HEK293 (cell line): ENCODE measurements at regions of chr11 and their contacts with region 1.

Region 1: GRCh38 chr11:36564376-36565030 is 3.3 kb upstream of the RAG1 start:
- H3K4me3 ChIP-seq: peak overlapping the region; percentile 21; the same call in 1 of the 2 replicates
- H3K27ac ChIP-seq: no peak overlapping the region
- H3K4me1 ChIP-seq: no peaks in the 10 kb centered on the region
- CTCF ChIP-seq: peak; percentile 32

Region 2: DNA sequence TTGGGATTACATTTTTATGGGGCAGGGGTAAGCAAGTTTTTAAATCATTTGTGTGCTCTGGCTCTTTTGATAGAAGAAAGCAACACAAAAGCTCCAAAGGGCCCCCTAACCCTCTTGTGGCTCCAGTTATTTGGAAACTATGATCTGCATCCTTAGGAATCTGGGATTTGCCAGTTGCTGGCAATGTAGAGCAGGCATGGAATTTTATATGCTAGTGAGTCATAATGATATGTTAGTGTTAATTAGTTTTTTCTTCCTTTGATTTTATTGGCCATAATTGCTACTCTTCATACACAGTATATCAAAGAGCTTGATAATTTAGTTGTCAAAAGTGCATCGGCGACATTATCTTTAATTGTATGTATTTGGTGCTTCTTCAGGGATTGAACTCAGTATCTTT is 13.4 kb after region 1 on chr11:
- CTCF ChIA-PET with region 1: interaction called, 51 read pairs
- POLR2A ChIA-PET with region 1: no interaction called
- H3K4me3 ChIP-seq: no peak overlapping the region
- H3K27ac ChIP-seq: no peak overlapping the region
- H3K4me1 ChIP-seq: no peaks in the 10 kb centered on the region
- CTCF ChIP-seq: no peak

Region 3: DNA sequence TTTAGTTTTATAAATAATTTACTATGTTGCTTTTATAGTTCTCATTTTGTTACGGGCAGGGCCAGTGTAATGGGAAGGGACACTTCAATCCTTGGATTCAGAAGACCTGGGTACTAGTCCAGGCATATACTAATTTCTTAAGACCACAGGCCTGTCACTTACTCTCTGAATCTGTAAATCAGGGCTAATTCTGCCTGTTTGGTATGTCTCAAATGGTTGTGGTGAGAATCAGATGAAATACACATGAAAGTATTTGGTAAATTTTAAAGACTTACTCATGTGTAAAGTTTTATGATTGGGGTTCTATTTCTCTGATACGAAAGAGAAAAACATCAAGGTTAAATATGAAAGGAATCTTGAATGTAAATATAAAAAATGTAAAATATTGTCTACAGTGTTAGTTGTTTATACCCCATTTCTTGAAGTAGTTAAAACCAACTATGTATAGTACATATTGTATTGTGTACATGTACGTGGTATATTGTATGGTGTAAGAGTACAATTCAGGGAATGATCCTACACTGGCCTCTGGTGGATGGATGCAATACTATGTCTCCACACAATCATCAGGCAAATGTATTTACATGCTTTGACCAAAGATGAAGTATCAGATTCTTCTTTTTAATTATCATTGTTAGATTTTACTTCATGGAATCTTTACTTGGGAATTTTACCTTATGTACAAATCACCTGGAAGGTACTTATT is 58.1 kb after region 1 on chr11:
- CTCF ChIA-PET with region 1: interaction called, 60 read pairs
- POLR2A ChIA-PET with region 1: no interaction called
- H3K4me3 ChIP-seq: no peak overlapping the region
- H3K27ac ChIP-seq: no peak overlapping the region
- H3K4me1 ChIP-seq: no peaks in the 10 kb centered on the region; the same call in 1 of the 2 replicates
- CTCF ChIP-seq: no peak

Region 4: GRCh38 chr11:36628765-36629244 is 64.3 kb after region 1 on chr11:
- CTCF ChIA-PET with region 1: interaction called, 23 read pairs
- POLR2A ChIA-PET with region 1: no interaction called
- H3K4me3 ChIP-seq: no peak overlapping the region
- H3K27ac ChIP-seq: no peak overlapping the region
- H3K4me1 ChIP-seq: 0 out of 2 replicates have a peak, but pooled peaks cover 2% of the 10 kb centered on the region
- CTCF ChIP-seq: no peak

Region 5: GRCh38 chr11:36672813-36673450 is 108.4 kb after region 1 on chr11:
- CTCF ChIA-PET with region 1: interaction called, 60 read pairs
- POLR2A ChIA-PET with region 1: no interaction called
- H3K4me3 ChIP-seq: no peak overlapping the region
- H3K27ac ChIP-seq: no peak overlapping the region
- H3K4me1 ChIP-seq: no peaks in the 10 kb centered on the region
- CTCF ChIP-seq: no peak

Region 6: DNA sequence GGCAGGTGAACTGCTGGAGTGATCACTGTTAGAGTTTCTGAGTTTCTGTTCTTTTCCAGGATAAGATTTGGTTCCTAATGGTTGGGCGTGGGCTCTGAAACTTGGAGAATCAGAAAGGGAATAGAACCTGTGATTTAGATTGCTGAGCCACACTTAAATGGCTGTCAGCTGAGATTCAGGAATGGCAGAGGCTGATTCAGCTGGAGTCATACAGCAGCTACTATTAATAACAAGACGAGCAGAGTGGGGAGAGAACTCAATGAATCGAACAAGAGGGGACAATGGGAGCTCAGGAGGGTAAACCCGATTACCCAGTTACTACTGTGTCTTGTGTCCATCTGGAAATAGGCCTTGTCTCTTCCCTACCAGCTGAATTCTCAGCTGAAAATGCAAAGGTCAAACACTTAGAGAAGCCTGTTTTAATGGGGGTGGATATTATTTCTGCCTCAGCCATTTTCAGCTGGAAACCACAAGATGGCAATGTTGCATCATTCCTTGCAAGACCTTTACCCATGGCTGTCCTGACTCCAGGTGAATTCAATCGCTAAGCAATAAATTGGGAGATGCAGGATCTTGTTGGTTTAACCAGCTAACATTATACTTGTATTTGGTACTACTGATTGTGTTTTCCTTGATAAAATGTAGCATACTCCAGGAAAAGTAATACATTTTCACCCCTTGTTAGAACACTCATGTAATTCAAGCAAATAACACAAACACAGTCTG is 138.0 kb after region 1 on chr11:
- CTCF ChIA-PET with region 1: interaction called, 74 read pairs
- POLR2A ChIA-PET with region 1: no interaction called
- H3K4me3 ChIP-seq: no peak overlapping the region
- H3K27ac ChIP-seq: no peak overlapping the region
- H3K4me1 ChIP-seq: no peaks in the 10 kb centered on the region
- CTCF ChIP-seq: peak; percentile 72; the same call in 1 of the 2 replicates

Region 7: DNA sequence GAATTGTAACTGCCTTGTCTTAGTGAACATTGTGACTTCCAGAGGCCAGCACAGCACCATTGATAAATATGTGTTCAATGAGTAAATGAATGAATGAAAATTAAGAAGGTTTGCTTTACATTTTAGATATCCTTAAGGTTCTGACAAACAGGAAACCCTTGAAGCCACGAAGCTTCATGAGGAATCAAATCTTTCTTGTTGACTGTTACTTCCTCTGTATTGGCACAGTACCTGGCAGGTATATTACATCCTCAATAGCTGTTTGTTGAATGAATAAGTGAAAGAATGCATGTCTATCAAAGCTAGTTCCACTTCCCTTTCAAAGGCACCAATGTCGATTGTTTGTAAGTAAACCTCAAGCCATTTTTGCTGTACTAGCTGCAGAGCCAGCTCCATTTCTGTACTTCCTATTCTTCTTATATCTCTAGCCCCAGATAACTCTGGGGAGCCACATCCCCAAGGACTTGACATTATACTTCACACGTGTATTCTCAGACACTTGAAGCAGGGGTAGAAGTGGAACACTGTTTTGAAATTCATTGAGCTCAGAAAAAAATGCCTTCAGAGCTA is 173.9 kb after region 1 on chr11:
- CTCF ChIA-PET with region 1: interaction called, 24 read pairs
- POLR2A ChIA-PET with region 1: no interaction called
- H3K4me3 ChIP-seq: no peak overlapping the region
- H3K27ac ChIP-seq: no peak overlapping the region
- H3K4me1 ChIP-seq: no peaks in the 10 kb centered on the region
- CTCF ChIP-seq: no peak